ENCODE measurements at regions of chr3 and their contacts with region 1.

Region 1: GRCh38 chr3:36729204-36730056 is 34.9 kb downstream of the DCLK3 start:
- DNase-seq: peak; percentile 64
- H3K4me3 Mint-ChIP-seq: no peak overlapping the region
- H3K27ac Mint-ChIP-seq: no peak overlapping the region
- H3K4me1 Mint-ChIP-seq: no peaks in the 10 kb centered on the region
- H3K27me3 Mint-ChIP-seq: peaks cover 21% of the 10 kb centered on the region
- CTCF ChIP-seq: peak; percentile 72

Region 2: DNA sequence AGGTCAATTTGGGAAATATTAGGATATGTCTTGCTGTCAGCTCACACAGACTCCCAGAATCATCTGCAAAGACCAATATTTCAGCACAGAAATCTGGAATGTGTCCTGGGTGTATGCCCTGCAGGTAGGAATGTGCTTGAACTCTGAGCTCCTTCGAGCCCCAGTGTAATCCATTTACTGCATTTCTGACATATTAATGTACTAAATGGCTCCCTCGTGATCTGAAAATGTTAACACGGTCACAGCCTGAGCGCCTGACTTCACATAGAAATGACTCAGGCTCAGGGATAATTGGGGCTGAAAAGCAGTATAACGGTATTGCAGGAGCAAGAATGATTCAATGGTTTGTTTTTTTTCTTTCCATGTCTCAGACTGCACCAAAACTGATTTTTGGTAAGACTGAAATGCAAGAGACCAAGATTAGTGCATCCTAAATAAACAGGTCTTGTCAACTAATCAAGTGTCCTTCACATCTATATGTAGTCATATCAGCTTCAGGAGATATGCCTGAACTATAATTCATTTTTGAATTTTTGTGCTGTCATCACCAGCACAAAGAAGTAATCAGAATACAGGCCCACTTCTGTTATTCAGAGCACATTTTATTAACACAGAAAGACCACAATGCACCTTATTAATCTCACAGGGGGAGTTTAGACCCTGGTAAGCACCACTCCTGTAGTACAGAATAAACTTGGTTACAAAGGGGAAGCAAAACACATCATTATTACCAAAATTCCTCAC is 14.9 kb before region 1 on chr3:
- CTCF ChIA-PET with region 1: interaction called, 21 read pairs
- POLR2A ChIA-PET with region 1: no interaction called
- intact Hi-C with region 1: no loop called
- DNase-seq: no peak
- H3K4me3 Mint-ChIP-seq: no peak overlapping the region
- H3K27ac Mint-ChIP-seq: no peak overlapping the region
- H3K4me1 Mint-ChIP-seq: peaks cover 10% of the 10 kb centered on the region
- H3K27me3 Mint-ChIP-seq: no peaks in the 10 kb centered on the region
- CTCF ChIP-seq: no peak

Region 3: GRCh38 chr3:36814776-36815175 is 85.3 kb after region 1 on chr3:
- CTCF ChIA-PET with region 1: interaction called, 10 read pairs
- POLR2A ChIA-PET with region 1: no interaction called
- intact Hi-C with region 1: no loop called
- DNase-seq: no peak
- H3K4me3 Mint-ChIP-seq: no peak overlapping the region
- H3K27ac Mint-ChIP-seq: no peak overlapping the region
- H3K4me1 Mint-ChIP-seq: peaks cover 11% of the 10 kb centered on the region
- H3K27me3 Mint-ChIP-seq: no peaks in the 10 kb centered on the region
- CTCF ChIP-seq: no peak

Region 4: GRCh38 chr3:36852071-36852470 is 122.6 kb after region 1 on chr3:
- CTCF ChIA-PET with region 1: interaction called, 11 read pairs
- POLR2A ChIA-PET with region 1: no interaction called
- intact Hi-C with region 1: no loop called
- DNase-seq: no peak
- H3K4me3 Mint-ChIP-seq: no peak overlapping the region
- H3K27ac Mint-ChIP-seq: no peak overlapping the region
- H3K4me1 Mint-ChIP-seq: no peaks in the 10 kb centered on the region
- H3K27me3 Mint-ChIP-seq: no peaks in the 10 kb centered on the region
- CTCF ChIP-seq: no peak

Region 5: DNA sequence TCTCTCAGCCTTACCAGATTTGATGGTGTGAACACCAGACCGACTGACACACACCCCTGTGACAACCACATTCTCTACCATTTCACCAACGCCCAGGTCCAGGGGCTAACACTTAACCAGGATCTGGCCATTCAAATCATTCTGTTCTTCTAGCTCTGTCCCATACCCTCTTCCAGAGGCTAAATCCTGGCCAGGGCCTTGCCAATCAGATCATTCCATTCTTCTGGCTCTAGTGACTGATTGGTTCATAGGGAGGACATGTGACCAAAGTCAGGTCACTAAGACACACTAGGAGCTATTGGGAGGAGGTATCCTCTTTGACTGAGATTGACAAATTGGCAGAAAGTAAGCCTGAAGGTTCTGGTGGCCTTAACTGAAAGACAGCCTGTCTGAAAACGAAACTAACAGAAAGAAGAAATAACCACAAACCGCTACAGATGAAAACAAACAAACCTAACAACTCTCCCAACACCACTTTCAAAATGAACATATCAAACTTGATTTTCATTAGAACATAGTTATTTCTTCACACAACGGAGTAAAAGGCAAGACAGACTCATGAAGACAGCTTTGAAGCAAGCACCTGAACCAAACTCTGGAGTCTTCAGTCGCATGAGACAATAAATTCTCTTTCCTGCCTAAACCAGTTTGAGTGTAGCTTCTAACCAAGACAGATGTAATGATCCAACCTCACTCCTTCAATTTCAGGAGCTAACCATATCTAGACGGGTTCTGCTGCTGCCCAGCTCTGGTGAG is 146.9 kb after region 1 on chr3:
- CTCF ChIA-PET with region 1: interaction called, 199 read pairs
- POLR2A ChIA-PET with region 1: no interaction called
- intact Hi-C with region 1: no loop called
- DNase-seq: no peak
- H3K4me3 Mint-ChIP-seq: no peak overlapping the region
- H3K27ac Mint-ChIP-seq: no peak overlapping the region
- H3K4me1 Mint-ChIP-seq: peaks cover 6% of the 10 kb centered on the region
- H3K27me3 Mint-ChIP-seq: no peaks in the 10 kb centered on the region
- CTCF ChIP-seq: no peak